GM12878 (cell line): ENCODE measurements at regions of chr11 and their contacts with region 1.

Region 1: DNA sequence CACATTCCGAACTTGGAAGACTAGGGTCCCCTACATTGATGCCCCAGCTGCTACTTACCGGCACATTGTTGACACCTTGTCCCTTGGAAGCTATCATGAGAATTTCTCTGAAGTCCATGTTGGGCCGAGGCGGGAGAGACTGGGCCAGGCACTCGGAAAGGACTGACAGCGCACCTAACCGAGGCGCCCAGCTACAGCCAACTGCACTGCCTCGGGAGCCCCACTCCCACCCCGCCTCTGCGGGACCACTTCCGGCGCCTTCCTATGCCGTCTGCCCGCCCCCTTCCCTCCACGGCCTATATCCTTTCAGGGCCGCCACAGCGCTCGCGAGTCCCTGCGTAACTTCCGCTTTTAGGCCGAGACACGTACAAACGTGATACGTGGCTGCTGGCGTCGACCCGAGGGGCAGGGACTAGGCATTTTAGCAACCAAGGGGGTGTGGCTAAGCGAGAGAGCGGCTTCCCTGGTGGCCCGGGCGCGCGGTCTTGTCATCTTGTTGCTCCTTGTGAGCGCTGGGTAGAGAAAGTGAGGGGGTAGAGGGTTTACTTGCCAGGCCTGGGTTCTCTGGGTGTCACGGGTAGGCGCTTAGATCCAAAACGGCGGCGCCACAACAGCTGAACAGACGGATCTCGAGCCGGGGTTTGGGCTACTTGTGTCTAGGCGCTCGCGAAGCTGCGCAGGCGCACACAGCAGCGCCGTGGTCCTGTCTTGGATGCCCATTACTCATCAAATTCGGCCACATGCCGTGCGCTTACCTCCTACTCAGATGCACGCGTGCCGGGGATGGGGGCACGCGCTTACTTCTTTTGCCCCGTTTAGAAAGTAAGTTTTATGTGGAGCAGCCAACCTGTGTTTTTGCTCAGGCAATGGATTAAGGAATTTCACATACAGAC is at the start of gene SPTY2D1:
- DNase-seq: peak; percentile 93
- ATAC-seq: peak; percentile 96
- H3K4me3 ChIP-seq: peak within 1 kb of the TSS; percentile 99
- H3K27ac ChIP-seq: peak within 1 kb of the TSS; percentile 89
- H3K4me1 ChIP-seq: peaks cover 7% of the 10 kb centered on the region
- H3K27me3 ChIP-seq: no peaks in the 10 kb centered on the region
- CTCF ChIP-seq: no peak
- EP300 ChIP-seq: no peak; a peak in 1 of 4 replicates
- POLR2A ChIP-seq: peak; percentile 97
- RAD21 ChIP-seq: no peak
- polyA plus RNA-seq, gene SPTY2D1: 4.6 to 4.7 TPM

Region 2: GRCh38 chr11:18321980-18322711 is 312.2 kb before region 1 on chr11 and contains the starts of genes GTF2H1 and HPS5:
- CTCF ChIA-PET with region 1: no interaction called
- POLR2A ChIA-PET with region 1: interaction called, 11 read pairs
- RAD21 ChIA-PET with region 1: interaction called, 4 read pairs
- SMC1A ChIA-PET with region 1: interaction called, 5 read pairs
- in situ Hi-C with region 1: no loop called
- intact Hi-C with region 1: loop called (anchors 10 kb)
- DNase-seq: peak; percentile 96
- ATAC-seq: peak; percentile 84
- H3K4me3 ChIP-seq: peak within 1 kb of the TSS; percentile 95
- H3K27ac ChIP-seq: peak within 1 kb of the TSS; percentile 100
- H3K4me1 ChIP-seq: 0 out of 2 replicates have a peak, but pooled peaks cover 2% of the 10 kb centered on the region
- H3K27me3 ChIP-seq: no peaks in the 10 kb centered on the region
- CTCF ChIP-seq: no peak
- EP300 ChIP-seq: no peak; a peak in 3 of 4 replicates
- POLR2A ChIP-seq: peak; percentile 90
- RAD21 ChIP-seq: no peak
- polyA plus RNA-seq, gene GTF2H1: 39.2 to 42.9 TPM
- polyA plus RNA-seq, gene HPS5: 11.9 to 19.9 TPM

Region 3: DNA sequence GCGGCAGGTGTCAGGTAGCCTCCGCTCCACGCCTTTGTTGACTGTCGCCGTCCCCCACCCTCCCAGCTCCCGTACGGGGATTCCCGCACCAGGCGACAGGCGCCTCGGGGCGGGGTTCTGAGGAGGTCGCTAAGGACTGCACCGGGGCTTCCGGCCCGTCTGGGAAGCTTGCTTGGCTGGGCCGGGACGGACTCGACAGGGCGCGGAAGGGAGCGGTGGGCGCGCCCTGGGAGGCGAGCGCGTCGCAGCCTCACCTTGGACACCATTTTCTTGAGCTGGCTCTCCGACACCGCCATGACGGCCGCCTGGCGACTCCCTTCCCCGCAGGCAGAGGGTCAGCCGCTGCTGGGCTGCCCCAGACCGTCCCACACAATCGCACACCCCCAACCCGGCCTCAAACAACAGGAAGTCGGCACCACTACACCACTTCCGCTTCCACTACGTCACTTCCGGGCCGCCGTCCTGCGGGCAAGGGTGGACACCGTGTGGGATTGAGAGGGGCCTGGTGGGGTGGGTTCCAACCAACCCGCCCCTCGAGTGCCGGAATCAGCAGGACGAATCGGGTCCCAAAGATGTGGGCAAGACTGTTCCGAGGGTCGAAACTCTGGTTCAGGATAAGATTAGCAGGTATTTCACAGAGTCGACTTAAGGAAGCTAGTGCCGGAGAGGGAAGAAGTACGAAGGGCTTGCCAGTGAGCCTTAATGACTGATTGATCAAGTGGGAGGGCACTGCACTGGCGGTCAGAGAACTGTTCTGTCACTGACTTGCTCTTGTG is 107.7 kb before region 1 on chr11 and contains the start of gene TSG101:
- CTCF ChIA-PET with region 1: no interaction called
- POLR2A ChIA-PET with region 1: interaction called, 10 read pairs
- RAD21 ChIA-PET with region 1: interaction called, 3 read pairs
- SMC1A ChIA-PET with region 1: interaction called, 4 read pairs
- in situ Hi-C with region 1: no loop called
- intact Hi-C with region 1: loop called (anchors 5 kb)
- DNase-seq: peak; percentile 69
- ATAC-seq: peak; percentile 91
- H3K4me3 ChIP-seq: peak within 1 kb of the TSS; percentile 95
- H3K27ac ChIP-seq: peak within 1 kb of the TSS; percentile 91
- H3K4me1 ChIP-seq: no peaks in the 10 kb centered on the region; the same call in 1 of the 2 replicates
- H3K27me3 ChIP-seq: no peaks in the 10 kb centered on the region
- CTCF ChIP-seq: no peak
- EP300 ChIP-seq: peak in 1 of 2 experiments; percentile 15; a peak in 1 of 4 replicates
- POLR2A ChIP-seq: peak; percentile 98
- RAD21 ChIP-seq: no peak
- polyA plus RNA-seq, gene TSG101: 22.3 to 37.6 TPM

Region 4: DNA sequence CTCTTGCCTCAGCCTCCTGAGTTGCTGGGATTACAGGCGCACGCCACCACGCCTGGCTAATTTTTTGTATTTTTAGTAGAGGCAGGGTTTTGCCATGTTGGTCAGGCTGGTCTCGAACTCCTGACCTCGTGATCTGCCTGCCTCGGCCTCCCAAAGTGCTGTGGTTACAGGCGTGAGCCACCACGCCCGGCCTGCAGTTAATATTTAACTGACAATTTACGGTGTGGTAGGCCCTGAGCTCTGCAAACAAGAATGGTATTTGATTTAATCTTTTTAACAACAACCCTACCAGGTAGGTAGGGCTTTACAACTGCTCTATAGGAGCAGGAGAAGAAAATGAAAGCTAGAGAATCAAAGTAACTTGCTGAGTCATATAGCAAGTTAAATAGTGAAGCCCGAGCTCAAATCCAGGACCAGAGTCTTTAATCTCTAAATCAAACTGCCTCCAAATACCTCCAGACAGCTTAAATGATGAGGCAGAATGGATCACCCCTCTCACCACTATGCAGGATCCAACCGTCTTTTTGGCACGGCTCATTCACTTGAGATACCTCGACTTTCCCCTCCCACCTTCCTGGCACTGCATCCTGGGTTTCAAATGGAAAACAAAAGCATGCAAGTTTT is 55.3 kb before region 1 on chr11:
- CTCF ChIA-PET with region 1: no interaction called
- POLR2A ChIA-PET with region 1: interaction called, 4 read pairs
- RAD21 ChIA-PET with region 1: interaction called, 11 read pairs
- SMC1A ChIA-PET with region 1: interaction called, 19 read pairs
- in situ Hi-C with region 1: no loop called
- intact Hi-C with region 1: no loop called
- DNase-seq: no peak
- ATAC-seq: peak; percentile 86
- H3K4me3 ChIP-seq: 0 out of 2 replicates have a peak overlapping the region, but pooled peaks have one; percentile 36
- H3K27ac ChIP-seq: peak overlapping the region; percentile 46; the same call in 1 of the 2 replicates
- H3K4me1 ChIP-seq: peaks cover 5% of the 10 kb centered on the region; the same call in 1 of the 2 replicates
- H3K27me3 ChIP-seq: no peaks in the 10 kb centered on the region
- CTCF ChIP-seq: no peak
- EP300 ChIP-seq: no peak
- POLR2A ChIP-seq: no peak
- RAD21 ChIP-seq: no peak

Region 5: GRCh38 chr11:18615628-18616392 is 18.6 kb before region 1 on chr11:
- CTCF ChIA-PET with region 1: interaction called, 80 read pairs
- POLR2A ChIA-PET with region 1: interaction called, 28 read pairs
- RAD21 ChIA-PET with region 1: interaction called, 77 read pairs
- SMC1A ChIA-PET with region 1: interaction called, 188 read pairs
- in situ Hi-C with region 1: no loop called
- intact Hi-C with region 1: loop called (anchors 1 kb)
- DNase-seq: peak; percentile 79
- ATAC-seq: peak; percentile 93
- H3K4me3 ChIP-seq: peak overlapping the region; percentile 8; the same call in 1 of the 2 replicates
- H3K27ac ChIP-seq: peak overlapping the region; percentile 69
- H3K4me1 ChIP-seq: peaks cover 38% of the 10 kb centered on the region
- H3K27me3 ChIP-seq: no peaks in the 10 kb centered on the region
- CTCF ChIP-seq: no peak
- EP300 ChIP-seq: peak; percentile 75 to 85
- POLR2A ChIP-seq: no peak
- RAD21 ChIP-seq: no peak

Region 6: GRCh38 chr11:18768472-18768901 is 134.1 kb after region 1 on chr11:
- CTCF ChIA-PET with region 1: interaction called, 9 read pairs
- POLR2A ChIA-PET with region 1: interaction called, 3 read pairs
- RAD21 ChIA-PET with region 1: interaction called, 17 read pairs
- SMC1A ChIA-PET with region 1: interaction called, 8 read pairs
- in situ Hi-C with region 1: no loop called
- intact Hi-C with region 1: no loop called
- DNase-seq: peak; percentile 77
- ATAC-seq: peak; percentile 80
- H3K4me3 ChIP-seq: no peak overlapping the region
- H3K27ac ChIP-seq: peak overlapping the region; percentile 35
- H3K4me1 ChIP-seq: peaks cover 38% of the 10 kb centered on the region
- H3K27me3 ChIP-seq: no peaks in the 10 kb centered on the region
- CTCF ChIP-seq: no peak
- EP300 ChIP-seq: peak; percentile 92 to 94
- POLR2A ChIP-seq: no peak
- RAD21 ChIP-seq: no peak